ENCODE measurements at regions of chr1 and their contacts with region 1.

Region 1: GRCh38 chr1:32870615-32871363 is at the start of gene FNDC5:
- DNase-seq: peak in 1 of 2 donors; percentile 81
- ATAC-seq: no peak
- H3K4me3 ChIP-seq: peak within 1 kb of the TSS; percentile 80 to 82
- H3K27ac ChIP-seq: no peak within 1 kb of the TSS
- H3K4me1 ChIP-seq: peaks cover 0 to 3% of the 10 kb centered on the region in 2 donors
- H3K27me3 ChIP-seq: no peaks in the 10 kb centered on the region
- total RNA-seq, gene FNDC5: 5.6 to 17.6 TPM

Region 2: DNA sequence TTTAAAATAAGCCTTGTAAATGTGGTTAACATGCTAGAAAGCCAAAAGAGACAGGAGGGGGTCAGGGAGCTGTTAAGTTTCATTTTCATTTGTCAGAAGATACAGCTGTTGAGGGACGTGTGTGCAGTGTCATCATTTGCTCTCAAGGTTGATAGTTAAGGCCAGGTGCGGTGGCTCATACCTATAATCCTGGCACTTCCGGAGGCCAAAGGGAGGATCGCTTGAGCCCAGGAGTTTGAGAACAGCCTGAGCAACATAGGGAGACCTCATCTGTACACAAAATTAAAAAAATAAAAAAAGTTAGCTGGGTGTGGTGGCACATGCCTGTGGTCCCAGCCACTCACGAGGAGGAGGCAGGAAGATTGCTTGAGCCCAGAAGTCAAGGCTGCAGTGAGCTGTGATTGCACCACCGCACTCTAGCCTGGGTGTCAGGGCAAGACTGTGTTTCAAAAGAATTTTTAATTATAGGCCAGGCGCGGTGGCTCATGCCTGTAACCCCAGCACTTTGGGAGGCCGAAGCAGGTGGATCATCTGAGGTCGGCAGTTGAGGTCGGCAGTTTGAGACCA is 243.1 kb before region 1 on chr1:
- intact Hi-C with region 1: no loop called
- DNase-seq: no peak
- ATAC-seq: no peak
- H3K4me3 ChIP-seq: no peak overlapping the region
- H3K27ac ChIP-seq: no peak overlapping the region
- H3K4me1 ChIP-seq: no peaks in the 10 kb centered on the region
- H3K27me3 ChIP-seq: no peaks in the 10 kb centered on the region

Region 3: DNA sequence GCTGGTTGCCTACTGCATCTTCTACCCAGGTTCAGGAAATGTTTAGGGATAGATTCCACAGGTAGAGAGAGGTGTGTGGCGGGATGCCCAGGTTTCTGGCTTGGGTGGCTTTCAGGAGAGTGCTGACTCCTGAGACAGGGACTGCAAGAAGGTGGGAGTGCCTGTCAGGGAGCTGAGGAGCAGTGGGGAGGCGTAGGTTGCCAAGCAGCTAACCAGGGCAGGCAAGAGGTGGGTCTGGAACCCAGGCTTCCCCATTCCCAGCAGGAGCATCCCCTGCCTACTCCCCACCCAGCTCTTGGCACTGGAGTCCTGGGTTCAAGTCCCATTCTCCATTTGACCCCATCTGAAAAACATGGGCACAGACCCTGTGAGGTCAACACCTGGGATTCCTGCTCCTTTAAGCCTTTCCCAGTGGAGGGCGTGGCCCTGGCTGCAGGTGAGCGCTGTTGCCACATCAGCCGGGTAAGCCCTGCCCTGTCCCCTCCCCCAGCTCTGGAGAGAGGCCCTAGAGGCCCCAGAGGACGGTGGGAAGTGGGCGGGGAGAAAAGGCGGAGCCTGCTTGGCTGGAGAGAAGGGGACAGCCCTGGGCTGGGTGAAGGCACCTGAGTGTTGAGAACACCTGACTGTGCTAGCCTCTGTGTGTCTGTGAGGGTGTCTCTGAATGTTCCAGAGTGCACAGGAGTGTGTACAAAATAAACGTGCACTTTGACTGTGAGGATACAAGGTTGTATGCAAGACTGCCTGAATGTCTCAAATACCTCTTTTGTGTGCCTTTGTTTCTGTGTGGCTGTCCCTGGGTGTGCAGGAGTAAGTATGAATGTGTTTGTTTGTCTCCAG is 154.3 kb before region 1 on chr1:
- intact Hi-C with region 1: loop called in 1 of 2 experiments (anchors 5 kb)
- DNase-seq: no peak
- ATAC-seq: no peak
- H3K4me3 ChIP-seq: no peak overlapping the region
- H3K27ac ChIP-seq: no peak overlapping the region
- H3K4me1 ChIP-seq: no peaks in the 10 kb centered on the region
- H3K27me3 ChIP-seq: no peaks in the 10 kb centered on the region

Region 4: GRCh38 chr1:32817159-32817814 is 53.5 kb before region 1 on chr1 and contains the starts of genes S100PBP and YARS1:
- intact Hi-C with region 1: loop called in 1 of 2 experiments (anchors 5 kb)
- DNase-seq: peak; percentile 100
- ATAC-seq: peak; percentile 99
- H3K4me3 ChIP-seq: peak within 1 kb of the TSS; percentile 52 to 84
- H3K27ac ChIP-seq: peak within 1 kb of the TSS; percentile 71 to 86
- H3K4me1 ChIP-seq: peaks cover 0 to 8% of the 10 kb centered on the region in 2 donors
- H3K27me3 ChIP-seq: no peaks in the 10 kb centered on the region
- total RNA-seq, gene S100PBP: 37.4 to 60.7 TPM
- total RNA-seq, gene YARS1: 55.2 to 76.1 TPM

Region 5: DNA sequence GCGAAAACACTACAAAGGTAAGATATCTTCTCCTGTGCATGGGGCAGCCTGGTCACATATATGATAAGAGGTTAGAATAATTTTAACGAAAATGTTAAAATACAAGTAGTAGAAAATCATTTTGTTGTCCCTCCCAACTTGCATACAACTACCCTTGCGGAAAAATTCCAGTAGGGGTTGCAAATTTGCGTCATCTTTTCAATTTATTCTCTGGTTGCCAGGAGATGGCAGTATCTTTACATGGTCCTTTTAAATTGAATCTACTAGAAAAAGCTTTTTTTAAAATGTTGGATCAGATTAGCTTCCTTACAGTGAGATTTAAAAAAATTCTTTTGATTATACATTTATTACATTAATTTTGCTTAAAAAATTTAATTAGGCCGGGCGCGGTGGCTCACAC is 42.4 kb before region 1 on chr1:
- intact Hi-C with region 1: loop called in 1 of 2 experiments (anchors 5 kb)
- DNase-seq: no peak
- ATAC-seq: no peak
- H3K4me3 ChIP-seq: no peak overlapping the region
- H3K27ac ChIP-seq: no peak overlapping the region
- H3K4me1 ChIP-seq: no peaks in the 10 kb centered on the region
- H3K27me3 ChIP-seq: no peaks in the 10 kb centered on the region

Region 6: GRCh38 chr1:33086384-33086850 is 215.6 kb after region 1 on chr1:
- intact Hi-C with region 1: loop called in 1 of 2 experiments (anchors 5 kb)
- DNase-seq: peak; percentile 84 to 89
- ATAC-seq: peak; percentile 85
- H3K4me3 ChIP-seq: no peak overlapping the region
- H3K27ac ChIP-seq: no peak overlapping the region
- H3K4me1 ChIP-seq: no peaks in the 10 kb centered on the region
- H3K27me3 ChIP-seq: no peaks in the 10 kb centered on the region

Region 7: DNA sequence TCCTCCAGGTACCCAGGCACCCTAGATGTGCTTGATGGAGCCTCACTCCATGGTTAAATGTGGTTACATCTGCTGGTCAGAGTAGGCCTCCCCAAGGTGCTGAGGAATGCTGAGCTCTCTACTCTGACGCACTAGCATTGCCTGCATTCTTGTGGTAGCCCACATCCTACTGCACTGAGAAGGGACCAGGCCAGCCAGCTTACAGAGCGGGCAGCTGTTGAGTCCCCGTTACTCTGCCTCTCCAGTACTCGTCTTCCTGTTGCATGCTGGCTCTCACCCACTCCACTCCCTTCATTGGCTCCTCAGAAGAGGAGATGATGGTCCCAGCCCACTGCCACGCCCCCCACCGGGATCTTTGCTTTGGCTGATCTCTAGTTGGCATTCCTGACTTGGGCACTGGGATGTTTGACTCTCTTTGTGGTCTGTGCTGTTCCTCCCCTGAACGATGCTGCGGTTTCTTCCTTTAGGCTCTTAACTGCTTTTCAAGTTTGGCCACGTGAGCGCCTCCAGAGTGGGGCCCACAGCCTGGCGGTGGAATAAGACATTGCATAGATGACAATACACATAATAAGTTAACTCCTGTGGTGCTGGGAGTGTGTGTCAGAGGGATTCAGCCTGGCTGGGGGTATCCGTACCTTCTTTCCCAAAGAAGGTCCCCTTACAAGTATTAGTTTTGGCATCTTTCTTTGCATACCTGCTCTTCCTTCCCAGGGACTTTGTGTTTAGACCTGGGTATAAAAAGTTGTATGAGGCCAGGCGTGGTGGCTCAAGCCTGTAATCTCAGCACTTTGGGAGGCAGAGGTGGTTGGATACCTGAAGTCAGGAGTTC is 228.7 kb after region 1 on chr1:
- intact Hi-C with region 1: no loop called
- DNase-seq: peak in 1 of 2 donors; percentile 77
- ATAC-seq: peak; percentile 40
- H3K4me3 ChIP-seq: no peak overlapping the region
- H3K27ac ChIP-seq: no peak overlapping the region
- H3K4me1 ChIP-seq: no peaks in the 10 kb centered on the region
- H3K27me3 ChIP-seq: no peaks in the 10 kb centered on the region

Measured in aorta (tissue), 5 donors.